Mammary epithelial cell (primary cell): ENCODE measurements at regions of chr19 and their contacts with region 1.

Region 1: GRCh38 chr19:4524808-4525562 is 6.7 kb upstream of the PLIN4 start:
- DNase-seq: peak; percentile 30
- H3K4me3 ChIP-seq: no peak overlapping the region
- H3K27ac ChIP-seq: no peak overlapping the region
- H3K4me1 ChIP-seq: peaks cover 2% of the 10 kb centered on the region
- H3K27me3 ChIP-seq: no peaks in the 10 kb centered on the region
- CTCF ChIP-seq: peak; percentile 83 to 87

Region 2: GRCh38 chr19:4267101-4267900 is 257.7 kb before region 1 on chr19:
- CTCF ChIA-PET with region 1: interaction called, 6 read pairs
- dilution Hi-C with region 1: no loop called
- in situ Hi-C with region 1: no loop called
- intact Hi-C with region 1: loop called (anchors 1 kb)
- DNase-seq: peak; percentile 42
- H3K4me3 ChIP-seq: no peak overlapping the region
- H3K27ac ChIP-seq: no peak overlapping the region
- H3K4me1 ChIP-seq: no peaks in the 10 kb centered on the region
- H3K27me3 ChIP-seq: no peaks in the 10 kb centered on the region
- CTCF ChIP-seq: peak; percentile 66 to 80

Region 3: GRCh38 chr19:4471403-4472173 is 53.4 kb before region 1 on chr19:
- CTCF ChIA-PET with region 1: interaction called, 6 read pairs
- dilution Hi-C with region 1: no loop called
- in situ Hi-C with region 1: no loop called
- intact Hi-C with region 1: loop called (anchors 1 kb)
- DNase-seq: peak; percentile 100
- H3K4me3 ChIP-seq: peak overlapping the region; percentile 52 to 66 (median 54)
- H3K27ac ChIP-seq: peak overlapping the region; percentile 14
- H3K4me1 ChIP-seq: peaks cover 14% of the 10 kb centered on the region
- H3K27me3 ChIP-seq: no peaks in the 10 kb centered on the region
- CTCF ChIP-seq: no peak

Region 4: DNA sequence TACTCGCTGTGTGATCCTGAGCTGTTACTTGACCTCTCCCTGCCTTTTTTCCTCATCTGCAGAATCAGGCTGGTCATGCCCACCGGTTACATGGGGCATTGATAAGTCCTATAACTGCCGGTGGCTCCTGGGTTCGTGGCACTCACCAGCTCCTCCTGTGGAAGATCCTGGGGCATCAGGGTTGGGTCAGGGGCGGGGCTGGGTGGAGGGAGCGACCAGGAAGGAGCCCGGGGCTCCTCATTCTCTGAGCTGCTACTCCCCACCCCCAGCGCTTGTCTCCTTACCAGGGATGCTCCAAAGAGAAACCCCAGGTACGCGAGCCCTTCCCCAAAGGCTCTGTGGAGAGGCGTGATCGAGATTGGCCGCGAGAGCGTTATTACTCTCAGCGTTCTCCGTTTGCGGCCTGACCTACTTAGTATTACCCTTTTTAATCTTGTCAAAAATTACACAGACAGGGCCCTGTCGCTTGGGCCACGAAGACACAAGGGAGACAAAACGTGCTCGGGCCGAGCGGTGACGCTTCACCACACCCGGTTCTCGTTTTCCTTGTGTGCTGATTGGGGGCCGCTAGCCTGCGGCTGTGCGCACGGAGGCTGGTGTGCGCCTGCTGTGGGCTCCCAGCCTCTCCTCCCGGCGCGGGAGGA is 42.1 kb before region 1 on chr19:
- CTCF ChIA-PET with region 1: no interaction called
- dilution Hi-C with region 1: loop called (anchors 5 kb)
- in situ Hi-C with region 1: no loop called
- intact Hi-C with region 1: no loop called
- DNase-seq: no peak
- H3K4me3 ChIP-seq: no peak overlapping the region
- H3K27ac ChIP-seq: no peak overlapping the region
- H3K4me1 ChIP-seq: no peaks in the 10 kb centered on the region
- H3K27me3 ChIP-seq: no peaks in the 10 kb centered on the region
- CTCF ChIP-seq: no peak

Region 5: GRCh38 chr19:4600893-4601292 is 75.9 kb after region 1 on chr19:
- CTCF ChIA-PET with region 1: no interaction called
- dilution Hi-C with region 1: loop called (anchors 5 kb)
- in situ Hi-C with region 1: no loop called
- intact Hi-C with region 1: no loop called
- DNase-seq: no peak
- H3K4me3 ChIP-seq: no peak overlapping the region
- H3K27ac ChIP-seq: no peak overlapping the region
- H3K4me1 ChIP-seq: peaks cover 6% of the 10 kb centered on the region
- H3K27me3 ChIP-seq: peaks cover 2% of the 10 kb centered on the region
- CTCF ChIP-seq: no peak

Region 6: GRCh38 chr19:4647676-4648644 is 123.0 kb after region 1 on chr19:
- CTCF ChIA-PET with region 1: no interaction called
- dilution Hi-C with region 1: loop called (anchors 5 kb)
- in situ Hi-C with region 1: no loop called
- intact Hi-C with region 1: no loop called
- DNase-seq: no peak
- H3K4me3 ChIP-seq: no peak overlapping the region
- H3K27ac ChIP-seq: no peak overlapping the region
- H3K4me1 ChIP-seq: no peaks in the 10 kb centered on the region
- H3K27me3 ChIP-seq: no peaks in the 10 kb centered on the region
- CTCF ChIP-seq: no peak